ENCODE measurements at regions of chr5 and their contacts with region 1.

Region 1: GRCh38 chr5:37902323-37902722 is 62.5 kb upstream of the GDNF start:
- DNase-seq: no peak

Region 2: GRCh38 chr5:37875051-37875787 is 27.1 kb before region 1 on chr5:
- intact Hi-C with region 1: no loop called
- DNase-seq: no peak

Region 3: GRCh38 chr5:37915097-37915736 is 12.9 kb after region 1 on chr5:
- intact Hi-C with region 1: no loop called
- DNase-seq: no peak

Region 4: GRCh38 chr5:37926732-37927131 is 24.4 kb after region 1 on chr5:
- intact Hi-C with region 1: loop called in 1 of 2 experiments (anchors 1 kb)
- DNase-seq: no peak

Region 5: DNA sequence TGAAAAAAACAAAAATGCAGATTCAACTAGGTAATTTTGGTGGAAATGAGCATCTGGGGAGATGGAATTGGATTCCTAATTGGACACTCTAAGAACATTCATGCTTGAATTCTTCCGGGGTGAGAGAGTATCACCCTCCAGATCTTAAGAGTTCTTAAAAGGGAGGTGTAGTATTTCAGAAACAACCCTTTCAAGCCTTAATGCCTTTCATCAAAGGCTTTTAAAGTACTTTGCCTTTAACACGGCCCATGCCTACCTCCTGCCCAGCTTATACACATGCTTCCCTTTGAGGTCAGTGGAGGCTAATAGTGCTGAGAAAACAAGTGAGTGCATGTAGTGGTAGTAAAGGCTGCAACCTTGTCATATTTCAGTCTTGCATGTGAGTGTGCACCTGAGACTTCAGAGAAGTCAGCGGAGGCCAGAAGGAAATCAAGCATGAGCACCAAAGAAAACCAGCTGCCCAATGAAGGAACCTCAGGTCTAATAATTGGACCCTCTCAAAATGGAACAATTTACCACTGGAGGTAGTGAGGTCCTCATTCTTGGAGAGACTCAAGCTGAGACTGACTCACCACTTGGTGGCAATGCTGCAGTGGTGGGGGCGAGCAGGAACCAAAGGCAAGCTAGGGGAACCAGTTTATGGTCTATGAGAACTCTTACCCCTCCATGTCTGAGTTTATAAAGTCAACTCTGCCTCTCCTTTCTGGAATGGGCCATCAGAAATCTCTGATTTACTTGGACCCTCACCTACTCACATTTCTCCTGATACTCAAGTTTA is 35.9 kb after region 1 on chr5:
- intact Hi-C with region 1: no loop called
- DNase-seq: no peak